Right ventricle myocardium inferior (tissue), 1 donor: ENCODE measurements at regions of chr10 and their contacts with region 1.

Region 1: GRCh38 chr10:3119796-3120459 is 52.6 kb downstream of the PFKP start:
- DNase-seq: no peak
- ATAC-seq: no peak

Region 2: GRCh38 chr10:3068201-3068967 is 51.5 kb before region 1 on chr10:
- intact Hi-C with region 1: loop called (anchors 5 kb)
- DNase-seq: peak; percentile 86
- ATAC-seq: peak; percentile 55